CD8-positive, alpha-beta T cell (primary cell): ENCODE measurements at regions of chr11 and their contacts with region 1.

Region 1: GRCh38 chr11:111408789-111409727 is 30.0 kb upstream of the POU2AF1 start:
- DNase-seq: no peak
- ATAC-seq: no peak
- H3K4me3 ChIP-seq: no peak overlapping the region
- H3K4me3 Mint-ChIP-seq: no peak overlapping the region
- H3K27ac ChIP-seq: no peak overlapping the region
- H3K27ac Mint-ChIP-seq: no peak overlapping the region
- H3K4me1 ChIP-seq: peaks cover 3% of the 10 kb centered on the region
- H3K4me1 Mint-ChIP-seq: peaks cover 3% of the 10 kb centered on the region
- H3K27me3 ChIP-seq: no peaks in the 10 kb centered on the region
- H3K27me3 Mint-ChIP-seq: no peaks in the 10 kb centered on the region
- CTCF ChIP-seq: no peak

Region 2: GRCh38 chr11:110148775-110149744 is 1260.0 kb before region 1 on chr11:
- CTCF ChIA-PET with region 1: no interaction called
- POLR2A ChIA-PET with region 1: no interaction called
- intact Hi-C with region 1: loop called in 1 of 2 experiments (anchors 5 kb)
- DNase-seq: no peak
- ATAC-seq: no peak
- H3K4me3 ChIP-seq: no peak overlapping the region
- H3K4me3 Mint-ChIP-seq: no peak overlapping the region
- H3K27ac ChIP-seq: no peak overlapping the region
- H3K27ac Mint-ChIP-seq: no peak overlapping the region
- H3K4me1 ChIP-seq: no peaks in the 10 kb centered on the region
- H3K4me1 Mint-ChIP-seq: no peaks in the 10 kb centered on the region
- H3K27me3 ChIP-seq: no peaks in the 10 kb centered on the region
- H3K27me3 Mint-ChIP-seq: peaks cover 14% of the 10 kb centered on the region
- CTCF ChIP-seq: no peak

Region 3: DNA sequence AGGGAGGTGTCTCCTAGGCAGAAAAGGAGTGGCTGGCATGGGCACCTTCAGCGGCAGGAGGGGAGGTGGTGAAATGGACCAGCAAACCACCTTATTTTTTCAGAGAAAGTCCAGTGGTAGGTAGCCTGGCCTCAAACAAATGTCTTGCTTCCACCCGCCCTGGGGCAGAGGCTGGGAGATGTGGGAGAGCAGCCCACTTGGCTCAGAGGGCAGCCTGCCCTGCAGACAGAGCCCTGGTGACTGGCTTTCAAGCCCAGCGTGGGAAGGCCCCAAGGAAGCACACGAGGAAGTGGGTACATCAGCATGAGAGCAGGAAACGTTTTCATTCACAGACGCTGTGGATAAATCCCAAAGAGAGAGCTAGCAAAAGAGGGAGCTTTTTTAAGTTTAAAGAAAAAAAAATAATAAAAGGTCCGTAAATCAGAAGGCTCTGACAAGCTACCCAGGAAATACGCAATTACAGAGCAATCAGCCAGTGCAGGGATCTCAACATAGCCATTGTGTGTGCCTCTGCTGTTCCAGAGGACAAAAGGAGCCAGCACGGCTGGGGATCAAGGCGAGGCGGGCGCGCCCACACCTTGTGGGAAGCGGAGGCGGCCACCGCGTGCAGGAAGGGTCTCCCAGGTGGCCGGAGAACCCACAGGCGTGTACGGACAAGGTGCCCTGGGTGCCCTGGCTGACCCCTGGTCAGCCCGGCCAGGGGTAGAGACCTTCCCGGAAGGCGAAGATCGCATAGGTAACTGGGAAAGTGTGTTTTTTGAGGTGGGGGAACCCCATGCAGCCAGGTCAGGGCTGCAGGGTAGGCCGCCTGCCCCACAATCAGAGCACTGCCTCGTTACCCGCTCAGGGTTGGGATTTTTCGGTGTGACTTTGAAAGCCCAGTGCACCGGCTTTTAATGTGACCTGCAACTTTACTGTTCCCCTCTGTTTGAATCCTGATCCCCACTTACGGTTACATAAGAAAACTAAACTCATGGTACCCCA is 1090.5 kb after region 1 on chr11:
- CTCF ChIA-PET with region 1: no interaction called
- POLR2A ChIA-PET with region 1: no interaction called
- intact Hi-C with region 1: no loop called
- DNase-seq: no peak
- ATAC-seq: no peak
- H3K4me3 ChIP-seq: no peak overlapping the region
- H3K4me3 Mint-ChIP-seq: no peak overlapping the region
- H3K27ac ChIP-seq: no peak overlapping the region
- H3K27ac Mint-ChIP-seq: no peak overlapping the region
- H3K4me1 ChIP-seq: no peaks in the 10 kb centered on the region
- H3K4me1 Mint-ChIP-seq: no peaks in the 10 kb centered on the region
- H3K27me3 ChIP-seq: no peaks in the 10 kb centered on the region
- H3K27me3 Mint-ChIP-seq: no peaks in the 10 kb centered on the region
- CTCF ChIP-seq: no peak